Activated CD8-positive, alpha-beta memory T cell treated with anti-CD3 and anti-CD28 coated beads, Interleukin-2, amount 10 ng/mL, durations not matched to agents 7 days and 5 days (primary cell): ENCODE measurements at regions of chr3 and their contacts with region 1.

Region 1: DNA sequence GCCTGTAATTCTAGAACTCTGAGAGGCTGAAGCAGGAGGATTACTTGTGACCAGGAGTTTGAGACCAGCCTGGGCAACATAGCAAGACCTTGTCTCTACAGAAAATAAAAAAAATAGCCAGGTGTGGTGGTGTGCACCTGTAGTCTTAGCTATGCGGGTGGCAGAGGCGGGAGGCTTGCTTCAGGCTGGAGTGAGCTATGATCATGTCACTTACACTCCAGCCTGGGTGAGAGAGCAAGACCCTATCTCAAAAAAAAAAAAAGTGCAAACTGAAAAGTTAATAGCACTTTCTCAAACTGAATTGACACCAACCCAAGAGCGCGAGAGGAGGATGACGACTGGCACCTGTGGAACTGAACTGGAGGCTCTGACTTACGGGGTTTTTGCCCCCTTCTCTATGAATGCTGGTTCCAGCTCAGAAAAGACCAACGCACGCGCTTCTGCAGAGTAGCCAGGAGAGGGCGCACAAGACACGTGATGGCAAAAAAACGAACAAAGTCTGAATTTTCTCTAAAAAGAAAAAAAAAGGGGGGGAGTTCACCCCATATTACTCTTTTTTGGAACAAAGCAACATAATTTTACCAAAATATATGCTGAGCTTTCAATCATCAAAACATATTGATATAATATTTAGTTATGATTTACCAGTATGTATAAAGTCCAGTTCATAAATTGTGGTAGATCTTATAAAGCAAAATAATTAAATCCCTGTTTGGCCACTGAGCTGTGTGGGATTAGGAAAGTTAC is 23.7 kb downstream of the CFAP92 start:
- DNase-seq: peak; percentile 77
- ATAC-seq: peak; percentile 77
- H3K4me3 Mint-ChIP-seq: no peak overlapping the region
- H3K27ac Mint-ChIP-seq: no peak overlapping the region
- H3K4me1 Mint-ChIP-seq: peaks cover 13% of the 10 kb centered on the region
- H3K27me3 Mint-ChIP-seq: peaks cover 8% of the 10 kb centered on the region

Region 2: GRCh38 chr3:128984596-128984995 is 14.4 kb after region 1 on chr3:
- CTCF ChIA-PET with region 1: interaction called, 18 read pairs
- DNase-seq: no peak
- ATAC-seq: no peak
- H3K4me3 Mint-ChIP-seq: no peak overlapping the region
- H3K27ac Mint-ChIP-seq: no peak overlapping the region
- H3K4me1 Mint-ChIP-seq: peaks cover 2% of the 10 kb centered on the region
- H3K27me3 Mint-ChIP-seq: peaks cover 7% of the 10 kb centered on the region

Region 3: DNA sequence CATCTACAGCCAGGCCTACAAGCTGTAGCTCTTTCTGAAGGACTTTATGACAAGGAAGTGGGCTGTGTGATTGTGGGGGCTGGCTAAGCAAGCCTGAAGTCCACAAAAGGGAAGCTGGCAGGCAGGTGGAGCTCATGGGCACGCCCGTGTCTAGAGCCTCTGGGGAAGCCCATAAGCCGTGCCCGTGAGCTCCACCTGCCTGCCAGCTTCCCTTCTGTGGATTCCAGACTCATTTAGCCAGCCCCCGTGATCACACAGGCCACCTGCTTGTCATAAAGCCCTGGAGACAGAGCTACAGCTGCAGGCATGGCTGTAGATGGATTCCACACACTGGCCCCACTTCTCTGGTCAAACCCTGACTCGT is 46.2 kb after region 1 on chr3:
- CTCF ChIA-PET with region 1: interaction called, 58 read pairs
- DNase-seq: peak; percentile 86
- ATAC-seq: peak; percentile 84
- H3K4me3 Mint-ChIP-seq: peak overlapping the region; percentile 66
- H3K27ac Mint-ChIP-seq: peak overlapping the region; percentile 95
- H3K4me1 Mint-ChIP-seq: peaks cover 38% of the 10 kb centered on the region
- H3K27me3 Mint-ChIP-seq: no peaks in the 10 kb centered on the region

Region 4: GRCh38 chr3:129052675-129053074 is 82.5 kb after region 1 on chr3:
- CTCF ChIA-PET with region 1: interaction called, 51 read pairs
- DNase-seq: no peak
- ATAC-seq: no peak
- H3K4me3 Mint-ChIP-seq: no peak overlapping the region
- H3K27ac Mint-ChIP-seq: no peak overlapping the region
- H3K4me1 Mint-ChIP-seq: peaks cover 6% of the 10 kb centered on the region
- H3K27me3 Mint-ChIP-seq: peaks cover 15% of the 10 kb centered on the region

Region 5: GRCh38 chr3:129120254-129121004 is 150.3 kb after region 1 on chr3:
- CTCF ChIA-PET with region 1: interaction called, 18 read pairs
- DNase-seq: peak; percentile 98
- ATAC-seq: peak; percentile 69
- H3K4me3 Mint-ChIP-seq: peak overlapping the region; percentile 88
- H3K27ac Mint-ChIP-seq: peak overlapping the region; percentile 97
- H3K4me1 Mint-ChIP-seq: peaks cover 61% of the 10 kb centered on the region
- H3K27me3 Mint-ChIP-seq: no peaks in the 10 kb centered on the region

Region 6: DNA sequence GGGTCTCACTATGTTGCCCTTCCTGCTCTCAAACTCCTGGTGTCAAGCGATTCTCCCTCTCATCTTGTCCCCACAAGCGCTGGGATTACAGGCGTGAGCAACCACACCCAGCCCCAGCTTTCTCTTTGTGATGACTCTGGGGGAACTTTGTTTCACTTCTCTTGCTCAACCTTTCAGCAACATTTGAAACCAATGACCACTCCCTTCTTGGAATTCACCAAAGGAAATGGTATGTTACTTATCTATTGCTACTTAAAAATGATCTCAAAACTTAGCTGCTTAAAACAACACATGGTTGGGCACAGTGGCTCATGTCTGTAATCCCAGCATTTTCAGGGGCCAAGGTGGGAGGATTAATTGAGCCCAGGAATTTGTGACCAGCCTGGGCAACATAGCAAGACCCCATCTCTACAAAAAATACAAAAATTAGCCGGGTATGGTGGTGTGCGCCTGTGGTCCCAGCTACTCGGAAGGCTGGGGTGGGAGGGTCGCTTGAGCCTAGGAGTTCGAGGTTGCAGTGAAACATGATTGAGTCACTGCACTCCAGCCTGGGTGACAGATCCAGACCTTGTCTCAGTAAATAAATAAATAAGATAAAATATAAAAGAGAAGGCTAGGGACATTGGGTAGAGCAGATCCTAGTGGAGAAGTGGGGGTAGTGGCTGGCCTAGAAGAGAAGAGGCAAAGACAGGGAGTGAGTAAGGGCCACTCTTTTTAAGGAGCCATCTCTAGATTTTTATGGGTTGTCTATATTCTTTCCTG is 269.0 kb after region 1 on chr3:
- CTCF ChIA-PET with region 1: interaction called, 18 read pairs
- DNase-seq: peak; percentile 80
- ATAC-seq: peak; percentile 87
- H3K4me3 Mint-ChIP-seq: peak overlapping the region; percentile 53
- H3K27ac Mint-ChIP-seq: peak overlapping the region; percentile 92
- H3K4me1 Mint-ChIP-seq: peaks cover 48% of the 10 kb centered on the region
- H3K27me3 Mint-ChIP-seq: no peaks in the 10 kb centered on the region

Region 7: GRCh38 chr3:129316131-129317013 is 346.2 kb after region 1 on chr3:
- CTCF ChIA-PET with region 1: interaction called, 11 read pairs
- DNase-seq: peak; percentile 90
- ATAC-seq: peak; percentile 55
- H3K4me3 Mint-ChIP-seq: peak overlapping the region; percentile 88
- H3K27ac Mint-ChIP-seq: peak overlapping the region; percentile 73
- H3K4me1 Mint-ChIP-seq: peaks cover 31% of the 10 kb centered on the region
- H3K27me3 Mint-ChIP-seq: no peaks in the 10 kb centered on the region